HepG2 (cell line): ENCODE measurements at regions of chr21 and their contacts with region 1.

Region 1: GRCh38 chr21:28992526-28993292 is at the start of gene LTN1:
- DNase-seq: peak; percentile 97
- ATAC-seq: peak; percentile 97
- H3K4me3 ChIP-seq: peak within 1 kb of the TSS; percentile 86 to 92 (median 87)
- H3K27ac ChIP-seq: peak within 1 kb of the TSS; percentile 82
- H3K4me1 ChIP-seq: peaks cover 29% of the 10 kb centered on the region
- H3K27me3 ChIP-seq: no peaks in the 10 kb centered on the region; a peak in 1 of 5 replicates
- CTCF ChIP-seq: no peak
- EP300 ChIP-seq: peak; percentile 39 to 49; a peak in 2 of 4 replicates
- POLR2A ChIP-seq: peak; percentile 78 to 86
- RAD21 ChIP-seq: no peak
- total RNA-seq, gene LTN1: 24.6 and 40.1 TPM in 2 replicates

Region 2: GRCh38 chr21:28943631-28944030 is 49.1 kb before region 1 on chr21:
- CTCF ChIA-PET with region 1: no interaction called
- POLR2A ChIA-PET with region 1: no interaction called
- in situ Hi-C with region 1: loop called (anchors 10 kb)
- intact Hi-C with region 1: no loop called
- DNase-seq: no peak
- ATAC-seq: no peak
- H3K4me3 ChIP-seq: no peak overlapping the region
- H3K27ac ChIP-seq: no peak overlapping the region
- H3K4me1 ChIP-seq: no peaks in the 10 kb centered on the region
- H3K27me3 ChIP-seq: no peaks in the 10 kb centered on the region
- CTCF ChIP-seq: no peak
- EP300 ChIP-seq: no peak
- POLR2A ChIP-seq: no peak
- RAD21 ChIP-seq: no peak

Region 3: GRCh38 chr21:29018540-29018939 is 25.8 kb after region 1 on chr21:
- CTCF ChIA-PET with region 1: no interaction called
- POLR2A ChIA-PET with region 1: interaction called, 50 read pairs
- in situ Hi-C with region 1: no loop called
- intact Hi-C with region 1: no loop called
- DNase-seq: no peak
- ATAC-seq: no peak
- H3K4me3 ChIP-seq: peak overlapping the region; percentile 75 to 100 (median 87)
- H3K27ac ChIP-seq: peak overlapping the region; percentile 81
- H3K4me1 ChIP-seq: peaks cover 39% of the 10 kb centered on the region
- H3K27me3 ChIP-seq: no peaks in the 10 kb centered on the region
- CTCF ChIP-seq: no peak
- EP300 ChIP-seq: no peak
- POLR2A ChIP-seq: no peak
- RAD21 ChIP-seq: no peak

Region 4: DNA sequence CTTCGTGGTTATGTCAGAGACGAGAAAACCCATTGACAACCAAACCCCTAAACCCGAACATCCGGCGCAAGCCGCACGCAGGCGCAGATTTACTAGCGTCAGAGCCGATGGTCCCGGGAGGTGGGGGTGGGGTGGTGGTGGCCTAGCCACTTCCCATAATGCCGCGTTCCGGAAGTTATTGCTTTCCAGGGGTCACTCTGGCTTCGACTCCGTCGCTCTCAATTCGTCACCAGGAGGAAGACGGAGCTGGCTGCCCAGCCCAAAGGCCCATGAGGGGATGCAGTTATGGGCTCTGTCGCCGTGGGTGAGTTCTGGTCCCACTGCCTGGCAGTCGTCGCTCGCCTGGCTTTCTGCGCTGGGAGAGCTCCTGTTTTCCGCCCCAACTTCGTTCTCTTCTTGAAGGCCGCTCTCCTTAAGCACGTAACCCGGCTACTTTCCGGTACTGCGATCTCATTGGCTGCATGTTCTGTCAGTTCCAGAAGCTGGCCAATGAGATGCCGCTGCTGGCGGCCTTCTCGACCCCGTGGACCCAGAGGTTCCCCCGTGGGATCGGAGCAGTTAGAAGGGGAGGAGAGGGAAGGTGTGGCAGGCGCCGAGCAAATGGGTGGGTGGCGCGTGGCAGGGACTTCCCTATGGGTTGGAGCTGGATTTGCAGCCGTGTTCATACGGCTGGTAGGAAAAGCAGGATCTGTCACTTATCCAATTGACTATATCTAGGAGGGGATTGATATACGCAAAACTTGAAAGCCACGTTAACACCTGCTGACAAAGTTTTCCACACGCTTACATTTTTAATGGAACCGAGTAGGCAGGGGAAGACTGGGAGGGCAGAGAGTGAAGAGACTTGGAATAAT is 32.0 kb after region 1 on chr21 and contains the start of gene USP16:
- CTCF ChIA-PET with region 1: no interaction called
- POLR2A ChIA-PET with region 1: interaction called, 50 read pairs
- in situ Hi-C with region 1: no loop called
- intact Hi-C with region 1: loop called (anchors 1 kb)
- DNase-seq: peak; percentile 95
- ATAC-seq: peak; percentile 98
- H3K4me3 ChIP-seq: peak within 1 kb of the TSS; percentile 79 to 94 (median 83)
- H3K27ac ChIP-seq: peak within 1 kb of the TSS; percentile 99
- H3K4me1 ChIP-seq: peaks cover 44% of the 10 kb centered on the region
- H3K27me3 ChIP-seq: no peaks in the 10 kb centered on the region; a peak in 1 of 5 replicates
- CTCF ChIP-seq: no peak
- EP300 ChIP-seq: 0 out of 4 replicates have a peak, but pooled peaks of 1 of the 2 experiments have one; percentile 5
- POLR2A ChIP-seq: peak; percentile 70 to 95
- RAD21 ChIP-seq: no peak; the same call in 1 of the 2 replicates
- total RNA-seq, gene USP16: 46.9 and 72.4 TPM in 2 replicates

Region 5: GRCh38 chr21:29320031-29320430 is 327.3 kb after region 1 on chr21:
- CTCF ChIA-PET with region 1: no interaction called
- POLR2A ChIA-PET with region 1: no interaction called
- in situ Hi-C with region 1: no loop called
- intact Hi-C with region 1: no loop called
- DNase-seq: no peak
- ATAC-seq: no peak
- H3K4me3 ChIP-seq: no peak overlapping the region
- H3K27ac ChIP-seq: no peak overlapping the region
- H3K4me1 ChIP-seq: peaks cover 24% of the 10 kb centered on the region
- H3K27me3 ChIP-seq: no peaks in the 10 kb centered on the region
- CTCF ChIP-seq: no peak
- EP300 ChIP-seq: no peak
- POLR2A ChIP-seq: no peak
- RAD21 ChIP-seq: no peak